Heart left ventricle (tissue), 16 donors: ENCODE measurements at regions of chr19 and their contacts with region 1.

Region 1: GRCh38 chr19:47514869-47515588 is at the start of gene NAPA:
- DNase-seq: peak; percentile 100
- ATAC-seq: peak; percentile 98 to 99 (median 98)
- H3K4me3 ChIP-seq: peak within 1 kb of the TSS; percentile 66 to 99 (median 92)
- H3K27ac ChIP-seq: peak within 1 kb of the TSS; percentile 86 to 99 (median 95)
- H3K4me1 ChIP-seq: peaks cover 17 to 51% (median 42%) of the 10 kb centered on the region in 12 donors
- H3K27me3 ChIP-seq: no peaks in the 10 kb centered on the region
- CTCF ChIP-seq: peak in 1 of 12 donors; percentile 97
- POLR2A ChIP-seq: peak; percentile 72 to 90
- total RNA-seq, gene NAPA: 113 to 238 (median 125) TPM

Region 2: GRCh38 chr19:47436712-47437401 is 78.2 kb before region 1 on chr19:
- intact Hi-C with region 1: loop called in 8 of 10 experiments (anchors 2 to 5 kb)
- DNase-seq: peak; percentile 64 to 83 (median 75)
- ATAC-seq: peak; percentile 74 to 93 (median 90)
- H3K4me3 ChIP-seq: no peak overlapping the region
- H3K27ac ChIP-seq: no peak overlapping the region
- H3K4me1 ChIP-seq: peaks cover 0 to 3% (median 0%) of the 10 kb centered on the region in 12 donors
- H3K27me3 ChIP-seq: peaks cover 0 to 76% (median 30%) of the 10 kb centered on the region in 9 donors
- CTCF ChIP-seq: peak; percentile 76 to 94 (median 85)
- POLR2A ChIP-seq: peak in 1 of 2 donors; percentile 16

Region 3: DNA sequence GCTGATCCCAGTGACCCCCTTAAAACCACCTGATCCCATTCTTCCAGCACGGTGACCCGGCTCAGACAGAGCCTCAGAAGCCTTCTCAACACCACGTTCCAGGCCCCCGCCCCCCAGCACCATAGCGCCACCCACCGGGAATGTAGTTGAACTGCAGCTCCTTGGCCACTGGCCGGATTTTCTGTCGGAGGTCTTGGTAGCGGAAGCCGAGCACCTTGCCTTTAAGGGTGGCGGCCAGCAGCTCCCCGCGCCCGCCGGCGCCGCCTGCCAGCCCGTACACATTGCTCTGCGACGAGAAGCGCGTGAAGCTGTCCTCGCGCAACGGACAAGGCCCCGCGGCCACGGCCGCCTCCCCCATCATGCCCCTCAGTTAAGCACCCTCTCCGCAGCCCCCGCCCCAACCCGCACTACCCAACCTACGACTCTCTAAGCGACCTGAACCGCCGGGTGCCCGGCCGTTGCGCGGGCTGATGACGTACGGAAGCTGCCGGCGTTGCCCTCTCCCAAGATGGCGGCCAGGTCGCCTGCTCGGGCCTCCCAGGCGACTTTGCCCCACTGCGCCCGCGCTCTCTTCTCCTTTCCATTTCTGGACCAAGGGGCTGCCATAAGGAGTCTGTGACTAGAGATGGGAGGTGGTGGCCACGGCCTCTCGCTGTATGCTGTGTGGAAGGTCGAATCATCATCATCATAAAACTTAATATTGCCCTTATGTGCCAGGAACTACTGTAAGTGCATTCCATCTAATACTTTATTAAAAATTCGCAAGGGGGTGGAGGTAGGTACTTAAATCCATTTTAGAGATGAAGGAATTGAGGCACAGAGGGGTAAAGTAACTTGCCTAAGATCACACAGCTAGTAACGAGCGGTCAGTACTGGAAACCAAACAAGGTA is 31.0 kb before region 1 on chr19 and contains the start of gene KPTN:
- intact Hi-C with region 1: loop called in 4 of 10 experiments (anchors 2 to 5 kb)
- DNase-seq: peak; percentile 88 to 94 (median 90)
- ATAC-seq: peak; percentile 83 to 93 (median 92)
- H3K4me3 ChIP-seq: peak within 1 kb of the TSS; percentile 20 to 80 (median 74)
- H3K27ac ChIP-seq: peak within 1 kb of the TSS; percentile 73 to 96 (median 92)
- H3K4me1 ChIP-seq: peaks cover 0 to 19% (median 12%) of the 10 kb centered on the region in 12 donors
- H3K27me3 ChIP-seq: no peaks in the 10 kb centered on the region
- CTCF ChIP-seq: peak; percentile 56 to 90 (median 78)
- POLR2A ChIP-seq: peak in 1 of 2 donors; percentile 26
- total RNA-seq, gene KPTN: 3.2 to 9.5 (median 7.0) TPM

Region 4: GRCh38 chr19:47549261-47549862 is 34.3 kb after region 1 on chr19:
- intact Hi-C with region 1: no loop called
- DNase-seq: no peak
- ATAC-seq: no peak
- H3K4me3 ChIP-seq: no peak overlapping the region
- H3K27ac ChIP-seq: no peak overlapping the region
- H3K4me1 ChIP-seq: peaks cover 0 to 10% (median 2%) of the 10 kb centered on the region in 12 donors
- H3K27me3 ChIP-seq: peaks cover 0 to 26% (median 11%) of the 10 kb centered on the region in 9 donors
- CTCF ChIP-seq: no peak
- POLR2A ChIP-seq: no peak

Region 5: GRCh38 chr19:47600246-47601179 is 85.5 kb after region 1 on chr19:
- intact Hi-C with region 1: loop called in 9 of 10 experiments (anchors 1 to 5 kb)
- DNase-seq: peak; percentile 100
- ATAC-seq: peak; percentile 98 to 99 (median 99)
- H3K4me3 ChIP-seq: peak overlapping the region; percentile 20 to 76 (median 67)
- H3K27ac ChIP-seq: peak overlapping the region; percentile 41 to 95 (median 85)
- H3K4me1 ChIP-seq: peaks cover 0 to 35% (median 18%) of the 10 kb centered on the region in 12 donors
- H3K27me3 ChIP-seq: no peaks in the 10 kb centered on the region
- CTCF ChIP-seq: peak in 3 of 12 donors; percentile 4 to 6 (median 6)
- POLR2A ChIP-seq: peak; percentile 24 to 93

Region 6: DNA sequence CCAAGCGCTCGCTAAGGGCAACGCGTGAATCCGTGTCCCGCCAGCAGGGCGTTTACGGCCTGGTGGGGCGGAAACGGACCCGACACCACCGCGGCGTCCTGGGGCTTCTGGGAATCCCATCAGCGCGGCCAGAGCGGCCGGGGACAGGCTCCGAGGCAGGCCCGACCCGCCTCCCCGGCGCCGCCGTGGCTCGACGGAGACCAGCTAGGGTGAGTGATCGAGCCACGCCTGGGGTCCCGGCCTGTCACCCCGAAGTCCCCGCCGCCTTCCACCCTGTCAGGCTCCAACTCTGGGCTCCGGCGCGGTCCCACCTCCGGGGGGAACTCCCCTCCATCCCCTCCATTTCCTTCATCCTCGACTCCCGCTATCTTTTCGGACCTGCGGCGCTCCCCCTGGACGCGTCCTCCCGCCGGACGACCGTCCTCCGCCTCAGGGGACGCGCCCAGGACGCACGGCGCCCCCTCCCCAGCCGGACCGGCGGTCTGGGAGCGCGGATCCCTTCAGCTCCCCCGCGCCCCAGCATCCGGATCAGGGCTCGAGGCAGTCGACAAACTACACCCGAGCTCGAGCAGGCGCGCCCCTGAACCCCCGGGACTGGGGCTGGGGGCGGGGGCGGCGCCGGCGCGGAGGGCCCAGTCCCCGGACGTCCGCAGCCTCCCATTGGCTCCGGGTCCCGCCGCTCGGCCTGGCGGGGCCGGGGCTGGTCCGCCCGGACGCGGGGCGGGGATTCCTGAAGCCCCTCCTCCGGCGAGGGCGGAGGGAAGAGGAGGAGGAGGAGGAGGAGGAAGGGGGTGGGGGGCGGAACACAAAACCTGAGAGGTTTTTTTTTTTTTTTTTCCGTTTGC is 93.3 kb after region 1 on chr19:
- intact Hi-C with region 1: loop called in 7 of 10 experiments (anchors 2 to 5 kb)
- DNase-seq: peak; percentile 95 to 97 (median 96)
- ATAC-seq: peak; percentile 92 to 95 (median 94)
- H3K4me3 ChIP-seq: peak overlapping the region; percentile 86 to 100 (median 98)
- H3K27ac ChIP-seq: peak overlapping the region; percentile 96 to 100 (median 99)
- H3K4me1 ChIP-seq: peaks cover 2 to 48% (median 30%) of the 10 kb centered on the region in 12 donors
- H3K27me3 ChIP-seq: no peaks in the 10 kb centered on the region
- CTCF ChIP-seq: peak in 7 of 12 donors; percentile 16 to 43 (median 30)
- POLR2A ChIP-seq: peak in 1 of 2 donors; percentile 88

Region 7: DNA sequence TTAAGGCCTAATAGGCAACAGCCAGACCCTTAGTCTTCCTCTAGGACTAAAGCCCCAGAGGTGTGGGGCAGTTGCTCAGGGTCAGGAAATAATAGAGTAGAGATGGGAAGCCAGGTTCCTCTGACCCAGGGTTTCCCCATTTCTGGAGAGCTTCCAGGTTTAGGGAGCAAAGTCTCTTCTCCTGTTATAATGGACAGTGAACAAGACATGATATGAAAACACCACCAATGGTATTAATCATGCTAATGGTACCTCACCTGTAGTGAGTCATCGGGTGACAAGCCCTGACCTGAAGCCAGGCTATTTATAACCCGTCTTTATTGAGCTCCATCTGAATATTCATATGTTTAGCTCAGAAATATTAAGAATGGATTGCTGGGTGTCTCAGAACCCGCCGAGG is 118.5 kb after region 1 on chr19:
- intact Hi-C with region 1: no loop called
- DNase-seq: no peak
- ATAC-seq: no peak
- H3K4me3 ChIP-seq: no peak overlapping the region
- H3K27ac ChIP-seq: peak overlapping the region in 3 of 12 donors; percentile 35 to 80 (median 41)
- H3K4me1 ChIP-seq: peaks cover 0 to 44% (median 22%) of the 10 kb centered on the region in 12 donors
- H3K27me3 ChIP-seq: no peaks in the 10 kb centered on the region
- CTCF ChIP-seq: no peak
- POLR2A ChIP-seq: no peak